Gastrocnemius medialis (tissue), 4 donors: ENCODE measurements at regions of chr20 and their contacts with region 1.

Region 1: DNA sequence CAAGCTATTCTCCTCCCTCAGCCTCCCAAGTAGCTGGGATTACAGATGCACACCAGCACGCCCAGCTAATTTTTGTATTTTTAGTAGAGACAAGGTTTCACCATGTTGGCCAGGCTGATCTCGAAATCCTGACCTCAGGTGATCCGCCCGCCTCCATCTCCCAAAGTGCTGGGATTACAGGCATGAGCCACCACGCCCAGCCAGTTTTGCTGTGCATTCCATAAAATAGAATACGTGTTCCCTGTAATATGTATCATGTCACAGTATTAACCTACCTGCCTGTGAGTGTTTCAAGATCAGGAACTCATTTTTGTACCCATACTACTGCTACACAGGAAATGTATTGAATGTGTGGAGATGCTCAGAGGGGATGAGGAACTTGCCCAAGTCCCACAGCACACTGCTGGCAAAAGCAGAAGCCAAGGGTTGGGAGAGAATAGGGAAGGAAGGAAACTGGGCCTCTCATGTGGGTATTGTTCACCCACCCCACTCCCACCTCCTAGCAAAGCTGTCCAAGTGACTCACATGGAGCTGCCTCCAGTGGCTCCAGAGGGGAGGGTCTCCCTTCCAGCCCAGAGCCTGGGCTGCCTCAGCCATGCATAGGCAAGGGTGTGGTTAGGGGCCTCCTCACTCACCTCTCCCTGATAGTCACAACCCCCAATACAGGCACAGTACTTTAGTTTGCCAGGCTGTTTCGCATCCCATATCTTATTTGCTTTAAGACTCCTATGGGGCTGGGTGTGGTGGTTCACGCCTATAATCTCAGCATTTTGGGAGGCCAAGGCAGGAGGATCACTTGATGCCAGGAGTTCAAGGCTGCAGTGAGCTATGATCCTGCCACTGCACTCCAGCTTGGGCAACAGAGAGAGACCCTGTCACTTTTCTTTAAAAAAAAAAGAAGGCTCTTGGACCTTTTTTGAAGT is 9.4 kb downstream of the HM13 start:
- DNase-seq: no peak
- ATAC-seq: no peak
- H3K4me3 ChIP-seq: no peak overlapping the region
- H3K27ac ChIP-seq: peak overlapping the region; percentile 69 to 91 (median 84)
- H3K4me1 ChIP-seq: peaks cover 9 to 21% of the 10 kb centered on the region in 2 donors
- H3K27me3 ChIP-seq: no peaks in the 10 kb centered on the region
- CTCF ChIP-seq: no peak
- POLR2A ChIP-seq: no peak

Region 2: GRCh38 chr20:31560094-31560899 is 36.7 kb after region 1 on chr20:
- in situ Hi-C with region 1: no loop called
- intact Hi-C with region 1: loop called (anchors 5 kb)
- DNase-seq: peak; percentile 28 to 74
- ATAC-seq: peak in 1 of 2 donors; percentile 63
- H3K4me3 ChIP-seq: no peak overlapping the region
- H3K27ac ChIP-seq: peak overlapping the region; percentile 74 to 84 (median 78)
- H3K4me1 ChIP-seq: peaks cover 15 to 32% of the 10 kb centered on the region in 2 donors
- H3K27me3 ChIP-seq: no peaks in the 10 kb centered on the region
- CTCF ChIP-seq: peak; percentile 75 to 90 (median 79)
- POLR2A ChIP-seq: no peak